PC-3 (cell line): ENCODE measurements at regions of chr20 and their contacts with region 1.

Region 1: DNA sequence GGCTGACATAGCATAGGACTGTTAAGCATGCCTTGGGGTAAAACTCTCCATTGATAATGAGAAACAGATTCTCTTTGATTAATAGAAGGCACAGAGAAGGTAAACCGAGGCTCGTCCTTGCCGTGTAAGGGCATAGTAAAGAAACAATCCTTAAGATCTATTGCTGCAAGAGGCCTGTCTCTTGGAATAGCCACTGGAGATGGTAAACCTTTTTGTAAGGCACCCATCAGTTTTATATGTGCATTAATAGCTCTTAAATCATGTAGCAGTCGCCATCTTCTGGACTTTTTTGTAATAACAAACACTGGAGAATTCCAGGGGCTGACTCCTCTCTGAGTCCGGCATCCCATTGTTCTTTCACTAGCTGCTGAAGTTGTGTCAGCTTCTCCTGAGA is 8.4 kb upstream of the ABHD12 start:
- DNase-seq: peak; percentile 96
- ATAC-seq: peak; percentile 76
- H3K4me3 ChIP-seq: no peak overlapping the region
- H3K27ac ChIP-seq: no peak overlapping the region
- H3K4me1 ChIP-seq: peaks cover 30% of the 10 kb centered on the region
- H3K27me3 ChIP-seq: no peaks in the 10 kb centered on the region
- CTCF ChIP-seq: peak; percentile 87

Region 2: DNA sequence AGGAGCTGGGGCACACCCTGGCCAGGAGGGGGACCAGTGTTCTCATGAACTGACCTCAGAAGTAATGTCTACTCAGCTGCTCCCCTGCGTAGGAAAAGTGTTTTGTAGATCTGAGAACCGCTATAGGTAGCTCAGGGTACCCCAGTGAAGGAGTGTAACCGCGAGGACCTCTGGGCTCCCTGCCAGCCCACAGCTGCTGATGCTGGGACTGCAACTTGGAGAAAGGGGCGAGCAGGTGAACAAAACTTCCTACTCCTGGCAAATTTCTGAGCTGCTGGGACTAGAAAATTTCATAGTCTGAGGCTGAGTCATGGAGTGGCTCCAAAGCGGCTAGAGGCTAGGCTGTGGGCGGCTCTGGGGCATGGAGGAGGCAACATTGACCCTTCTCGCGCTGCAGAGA is 99.2 kb before region 1 on chr20:
- CTCF ChIA-PET with region 1: interaction called, 12 read pairs
- POLR2A ChIA-PET with region 1: no interaction called
- intact Hi-C with region 1: loop called (anchors 2 kb)
- DNase-seq: peak; percentile 31
- ATAC-seq: peak; percentile 16
- H3K4me3 ChIP-seq: no peak overlapping the region
- H3K27ac ChIP-seq: no peak overlapping the region
- H3K4me1 ChIP-seq: peaks cover 6% of the 10 kb centered on the region; the same call in 1 of the 2 replicates
- H3K27me3 ChIP-seq: no peaks in the 10 kb centered on the region
- CTCF ChIP-seq: no peak

Region 3: GRCh38 chr20:25336561-25337422 is 62.2 kb before region 1 on chr20:
- CTCF ChIA-PET with region 1: interaction called, 39 read pairs
- POLR2A ChIA-PET with region 1: no interaction called
- intact Hi-C with region 1: loop called (anchors 1 kb)
- DNase-seq: peak; percentile 54
- ATAC-seq: peak; percentile 89
- H3K4me3 ChIP-seq: no peak overlapping the region
- H3K27ac ChIP-seq: no peak overlapping the region
- H3K4me1 ChIP-seq: no peaks in the 10 kb centered on the region
- H3K27me3 ChIP-seq: no peaks in the 10 kb centered on the region
- CTCF ChIP-seq: peak; percentile 74

Region 4: GRCh38 chr20:25364180-25364788 is 34.8 kb before region 1 on chr20:
- CTCF ChIA-PET with region 1: no interaction called
- POLR2A ChIA-PET with region 1: no interaction called
- intact Hi-C with region 1: loop called (anchors 2 kb)
- DNase-seq: peak; percentile 43
- ATAC-seq: peak; percentile 58
- H3K4me3 ChIP-seq: no peak overlapping the region
- H3K27ac ChIP-seq: peak overlapping the region; percentile 2; the same call in 1 of the 2 replicates
- H3K4me1 ChIP-seq: peaks cover 17% of the 10 kb centered on the region
- H3K27me3 ChIP-seq: no peaks in the 10 kb centered on the region
- CTCF ChIP-seq: no peak